Body of pancreas (tissue), 4 donors: ENCODE measurements at regions of chr22 and their contacts with region 1.

Region 1: GRCh38 chr22:49415151-49415951 is 412.3 kb downstream of the BRD1 start:
- DNase-seq: no peak
- ATAC-seq: no peak
- H3K4me3 ChIP-seq: no peak overlapping the region
- H3K27ac ChIP-seq: no peak overlapping the region
- H3K4me1 ChIP-seq: no peaks in the 10 kb centered on the region
- H3K27me3 ChIP-seq: no peaks in the 10 kb centered on the region
- CTCF ChIP-seq: no peak
- POLR2A ChIP-seq: no peak

Region 2: DNA sequence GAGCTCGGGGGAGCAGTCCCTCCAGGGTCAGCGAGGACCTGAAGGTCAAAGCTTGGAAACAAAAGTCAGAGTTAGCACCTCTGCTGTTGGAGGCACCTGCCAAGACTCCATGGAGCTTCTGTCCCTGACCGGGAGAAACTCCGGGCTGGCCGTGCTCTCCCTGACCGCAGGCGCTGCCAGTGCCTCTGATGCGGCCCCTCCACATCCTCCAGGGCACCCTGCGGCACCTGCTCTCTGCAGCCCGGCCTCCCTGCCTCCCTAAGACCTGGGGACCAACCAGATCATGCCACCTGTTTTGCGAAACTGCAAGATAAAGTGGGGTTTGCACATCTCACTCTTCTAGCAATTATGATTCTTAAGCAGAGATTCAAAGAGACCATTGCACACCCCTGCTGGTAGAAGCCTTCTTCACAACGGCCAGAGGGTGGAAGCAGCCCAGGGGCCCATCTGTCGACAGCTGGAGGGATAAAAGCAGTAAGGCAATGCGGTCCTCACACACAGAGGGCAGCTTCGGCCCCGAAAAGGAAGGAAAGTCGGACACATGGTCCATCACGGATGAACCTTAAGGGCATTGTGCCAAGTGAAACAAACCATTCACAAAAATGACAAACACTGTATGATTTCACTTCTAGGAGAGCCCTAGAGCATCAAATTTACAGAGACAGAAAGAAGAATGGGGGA is 64.8 kb before region 1 on chr22:
- intact Hi-C with region 1: loop called (anchors 10 kb)
- DNase-seq: no peak
- ATAC-seq: no peak
- H3K4me3 ChIP-seq: no peak overlapping the region
- H3K27ac ChIP-seq: no peak overlapping the region
- H3K4me1 ChIP-seq: no peaks in the 10 kb centered on the region
- H3K27me3 ChIP-seq: no peaks in the 10 kb centered on the region
- CTCF ChIP-seq: no peak
- POLR2A ChIP-seq: no peak